K562 (cell line): ENCODE measurements at regions of chr5 and their contacts with region 1.

Region 1: GRCh38 chr5:176388444-176389134 is at the starts of genes HIGD2A and NOP16:
- DNase-seq: peak; percentile 84 to 99 (median 94)
- ATAC-seq: peak; percentile 91
- H3K4me3 ChIP-seq: peak within 1 kb of the TSS; percentile 69
- H3K27ac ChIP-seq: peak within 1 kb of the TSS; percentile 97
- H3K4me1 ChIP-seq: peaks cover 6 to 16% of the 10 kb centered on the region in 2 experiments; a peak in 4 of 5 replicates
- H3K27me3 ChIP-seq: no peaks in the 10 kb centered on the region
- CTCF ChIP-seq: no peak
- EP300 ChIP-seq: peak; percentile 53; the same call in 1 of the 2 replicates
- POLR2A ChIP-seq: peak; percentile 95
- RAD21 ChIP-seq: peak; percentile 1 to 6; a peak in 1 of 4 replicates
- polyA plus RNA-seq, gene HIGD2A: 232 to 235 TPM
- polyA plus RNA-seq, gene NOP16: 183 to 342 TPM

Region 2: GRCh38 chr5:176361437-176362232 is 27.0 kb before region 1 on chr5 and contains the start of gene KIAA1191:
- CTCF ChIA-PET with region 1: no interaction called
- POLR2A ChIA-PET with region 1: interaction called, 4 read pairs
- in situ Hi-C with region 1: no loop called
- intact Hi-C with region 1: loop called (anchors 1 kb)
- DNase-seq: peak; percentile 91 to 96 (median 93)
- ATAC-seq: peak; percentile 99
- H3K4me3 ChIP-seq: peak within 1 kb of the TSS; percentile 96
- H3K27ac ChIP-seq: peak within 1 kb of the TSS; percentile 75
- H3K4me1 ChIP-seq: peaks cover 9 to 18% of the 10 kb centered on the region in 2 experiments; a peak in 4 of 5 replicates
- H3K27me3 ChIP-seq: no peaks in the 10 kb centered on the region
- CTCF ChIP-seq: peak in 2 of 3 experiments; percentile 54 to 63; a peak in 4 of 6 replicates
- EP300 ChIP-seq: no peak
- POLR2A ChIP-seq: peak; percentile 95
- RAD21 ChIP-seq: peak; percentile 56 to 59
- polyA plus RNA-seq, gene KIAA1191: 31.0 to 56.5 TPM

Region 3: GRCh38 chr5:176373100-176373818 is 15.3 kb before region 1 on chr5:
- CTCF ChIA-PET with region 1: no interaction called
- POLR2A ChIA-PET with region 1: interaction called, 12 read pairs
- in situ Hi-C with region 1: no loop called
- intact Hi-C with region 1: no loop called
- DNase-seq: peak in 2 of 4 experiments; percentile 43 to 49
- ATAC-seq: peak; percentile 79
- H3K4me3 ChIP-seq: no peak overlapping the region
- H3K27ac ChIP-seq: no peak overlapping the region
- H3K4me1 ChIP-seq: peaks cover 7 to 19% of the 10 kb centered on the region in 2 experiments
- H3K27me3 ChIP-seq: no peaks in the 10 kb centered on the region
- CTCF ChIP-seq: no peak
- EP300 ChIP-seq: no peak
- POLR2A ChIP-seq: no peak
- RAD21 ChIP-seq: no peak

Region 4: DNA sequence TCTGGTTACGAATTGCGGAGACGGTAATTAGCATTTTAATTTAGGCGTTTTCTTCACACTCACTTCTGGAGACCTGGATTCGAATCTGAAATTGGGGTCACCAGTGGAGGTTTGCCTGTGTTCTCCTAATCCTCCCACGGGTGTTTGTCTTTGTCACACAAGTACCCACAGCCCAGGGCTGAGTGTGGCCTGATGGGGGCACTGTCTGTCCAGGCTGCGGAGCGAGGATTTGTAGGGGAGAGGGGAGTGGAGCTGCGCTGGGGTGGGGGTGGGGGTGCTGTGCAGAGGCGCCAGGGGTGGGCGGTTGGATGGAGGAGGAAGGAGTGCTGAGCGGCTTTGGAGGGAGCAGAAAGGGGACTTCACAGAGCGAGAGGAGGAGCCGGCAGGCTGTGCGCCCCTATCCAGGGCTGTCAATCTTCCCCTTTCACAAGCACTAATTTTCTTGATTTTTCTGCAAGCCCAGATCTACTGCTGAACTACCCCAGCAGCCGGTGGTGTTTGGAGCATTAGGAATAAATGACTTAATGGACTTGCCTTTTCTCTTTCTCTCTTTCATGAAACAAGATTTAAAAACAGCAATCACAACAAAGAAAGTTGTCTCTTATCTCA is 311.8 kb after region 1 on chr5:
- CTCF ChIA-PET with region 1: no interaction called
- POLR2A ChIA-PET with region 1: no interaction called
- in situ Hi-C with region 1: no loop called
- intact Hi-C with region 1: no loop called
- DNase-seq: peak; percentile 40 to 52 (median 46)
- ATAC-seq: peak; percentile 86
- H3K4me3 ChIP-seq: no peak overlapping the region
- H3K27ac ChIP-seq: no peak overlapping the region
- H3K4me1 ChIP-seq: peaks cover 0 to 4% of the 10 kb centered on the region in 2 experiments; a peak in 2 of 5 replicates
- H3K27me3 ChIP-seq: peaks cover 59 to 87% of the 10 kb centered on the region in 2 experiments
- CTCF ChIP-seq: peak; percentile 41 to 63 (median 43); a peak in 5 of 6 replicates
- EP300 ChIP-seq: no peak
- POLR2A ChIP-seq: no peak
- RAD21 ChIP-seq: peak in 1 of 2 experiments; percentile 45; a peak in 2 of 4 replicates